ENCODE measurements at regions of chr12 and their contacts with region 1.

Region 1: GRCh38 chr12:104478396-104479122 is 21.8 kb downstream of the CHST11 start:
- DNase-seq: peak; percentile 75
- H3K4me3 Mint-ChIP-seq: peak overlapping the region; percentile 83
- H3K27ac Mint-ChIP-seq: peak overlapping the region; percentile 95
- H3K4me1 Mint-ChIP-seq: peaks cover 76% of the 10 kb centered on the region
- H3K27me3 Mint-ChIP-seq: no peaks in the 10 kb centered on the region

Region 2: GRCh38 chr12:104334581-104334980 is 144.0 kb before region 1 on chr12:
- intact Hi-C with region 1: no loop called
- DNase-seq: no peak
- H3K4me3 Mint-ChIP-seq: no peak overlapping the region
- H3K27ac Mint-ChIP-seq: no peak overlapping the region
- H3K4me1 Mint-ChIP-seq: peaks cover 2% of the 10 kb centered on the region
- H3K27me3 Mint-ChIP-seq: no peaks in the 10 kb centered on the region

Region 3: DNA sequence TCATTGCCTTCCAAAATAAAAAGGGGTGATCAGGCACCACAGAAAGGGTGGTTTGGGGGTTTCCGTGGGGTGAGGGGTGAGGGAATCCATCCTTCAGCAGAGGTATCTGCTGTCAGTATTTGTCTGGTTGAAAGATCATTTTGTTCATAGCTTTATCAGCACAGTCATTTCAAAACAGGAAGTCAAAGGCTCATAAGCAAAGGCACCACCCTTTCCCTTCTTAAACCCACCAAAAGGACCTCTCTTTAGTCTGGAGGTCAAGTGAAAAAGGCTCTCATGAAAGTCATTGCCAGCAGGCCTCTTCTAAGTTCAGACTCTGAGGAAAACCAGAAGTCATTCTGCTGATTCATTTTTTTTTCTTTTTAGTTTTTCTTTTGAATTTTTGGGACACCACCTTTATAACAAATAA is 15.6 kb before region 1 on chr12:
- intact Hi-C with region 1: loop called (anchors 1 kb)
- DNase-seq: peak; percentile 86
- H3K4me3 Mint-ChIP-seq: peak overlapping the region; percentile 78
- H3K27ac Mint-ChIP-seq: peak overlapping the region; percentile 89
- H3K4me1 Mint-ChIP-seq: peaks cover 69% of the 10 kb centered on the region
- H3K27me3 Mint-ChIP-seq: no peaks in the 10 kb centered on the region

Region 4: GRCh38 chr12:104468371-104468770 is 10.2 kb before region 1 on chr12:
- intact Hi-C with region 1: loop called (anchors 1 kb)
- DNase-seq: no peak
- H3K4me3 Mint-ChIP-seq: no peak overlapping the region
- H3K27ac Mint-ChIP-seq: no peak overlapping the region
- H3K4me1 Mint-ChIP-seq: peaks cover 75% of the 10 kb centered on the region
- H3K27me3 Mint-ChIP-seq: no peaks in the 10 kb centered on the region

Region 5: GRCh38 chr12:104494137-104494792 is 15.7 kb after region 1 on chr12:
- intact Hi-C with region 1: loop called (anchors 2 kb)
- DNase-seq: peak; percentile 77
- H3K4me3 Mint-ChIP-seq: peak overlapping the region; percentile 81
- H3K27ac Mint-ChIP-seq: peak overlapping the region; percentile 81
- H3K4me1 Mint-ChIP-seq: peaks cover 74% of the 10 kb centered on the region
- H3K27me3 Mint-ChIP-seq: no peaks in the 10 kb centered on the region